MCF 10A (cell line): ENCODE measurements at regions of chr18 and their contacts with region 1.

Region 1: DNA sequence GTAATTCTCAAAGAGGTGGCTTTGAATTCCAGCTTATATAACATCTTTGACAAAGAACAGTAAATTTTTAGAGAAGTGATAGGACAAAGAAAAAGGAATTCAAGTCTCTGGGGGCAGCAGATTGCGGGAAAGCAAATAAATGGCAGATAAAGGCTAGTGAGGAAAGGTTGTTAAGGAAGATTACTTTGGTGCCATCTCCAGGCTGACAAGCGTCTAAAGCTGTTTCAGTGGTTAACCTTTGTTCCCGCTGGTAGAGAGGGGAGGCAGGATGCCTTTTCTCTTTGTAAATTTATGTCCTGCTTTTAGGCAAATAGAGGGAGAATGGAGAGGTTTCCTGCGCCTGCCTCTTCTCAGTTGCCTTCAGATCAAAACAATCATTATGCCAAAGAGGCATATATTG is 431.2 kb upstream of the CHST9 start:
- DNase-seq: no peak
- H3K4me3 Mint-ChIP-seq: no peak overlapping the region
- H3K27ac Mint-ChIP-seq: no peak overlapping the region
- H3K4me1 Mint-ChIP-seq: no peaks in the 10 kb centered on the region
- H3K27me3 Mint-ChIP-seq: no peaks in the 10 kb centered on the region
- CTCF ChIP-seq: no peak

Region 2: DNA sequence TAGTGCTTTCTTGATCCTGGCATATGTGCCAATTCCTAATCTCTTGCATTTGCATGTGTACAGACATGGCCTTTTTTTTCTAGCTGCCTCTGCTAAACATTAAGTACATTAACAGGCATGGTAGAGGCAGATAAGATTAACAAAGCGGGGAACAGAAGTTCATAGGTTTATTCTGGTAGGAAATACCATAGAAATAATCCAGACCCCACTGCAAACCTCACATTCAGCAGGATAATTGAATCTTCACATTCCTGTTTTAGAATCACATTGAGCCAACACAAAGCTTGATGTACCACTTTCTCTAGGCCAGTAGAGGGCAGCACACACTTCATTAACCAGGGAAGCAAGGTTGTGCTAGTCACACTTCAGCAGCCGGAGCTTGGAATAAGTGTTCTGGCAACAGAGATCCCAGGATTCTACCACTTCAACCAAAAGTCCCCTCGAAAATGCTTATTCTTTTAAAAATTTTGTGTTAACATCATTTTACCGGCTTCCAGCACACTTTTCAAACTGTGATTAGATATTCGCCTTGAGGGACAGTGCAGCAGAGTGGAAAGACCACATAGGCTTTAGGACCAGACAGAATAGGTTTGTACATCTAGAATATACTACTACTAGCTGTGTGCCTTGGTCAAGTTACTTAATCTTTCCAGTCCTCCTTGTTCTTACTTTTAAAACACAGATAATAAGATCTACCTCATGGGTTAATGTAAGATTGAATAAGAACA is 11.1 kb before region 1 on chr18:
- CTCF ChIA-PET with region 1: interaction called, 27 read pairs
- POLR2A ChIA-PET with region 1: no interaction called
- intact Hi-C with region 1: no loop called
- DNase-seq: peak; percentile 78
- H3K4me3 Mint-ChIP-seq: no peak overlapping the region
- H3K27ac Mint-ChIP-seq: no peak overlapping the region
- H3K4me1 Mint-ChIP-seq: peaks cover 5% of the 10 kb centered on the region
- H3K27me3 Mint-ChIP-seq: no peaks in the 10 kb centered on the region
- CTCF ChIP-seq: peak; percentile 72

Region 3: GRCh38 chr18:27636576-27637085 is 20.3 kb after region 1 on chr18:
- CTCF ChIA-PET with region 1: no interaction called
- POLR2A ChIA-PET with region 1: no interaction called
- intact Hi-C with region 1: no loop called
- DNase-seq: no peak
- H3K4me3 Mint-ChIP-seq: no peak overlapping the region
- H3K27ac Mint-ChIP-seq: no peak overlapping the region
- H3K4me1 Mint-ChIP-seq: no peaks in the 10 kb centered on the region
- H3K27me3 Mint-ChIP-seq: no peaks in the 10 kb centered on the region
- CTCF ChIP-seq: no peak